Posterior vena cava (tissue), 2 donors: ENCODE measurements at regions of chr6 and their contacts with region 1.

Region 1: DNA sequence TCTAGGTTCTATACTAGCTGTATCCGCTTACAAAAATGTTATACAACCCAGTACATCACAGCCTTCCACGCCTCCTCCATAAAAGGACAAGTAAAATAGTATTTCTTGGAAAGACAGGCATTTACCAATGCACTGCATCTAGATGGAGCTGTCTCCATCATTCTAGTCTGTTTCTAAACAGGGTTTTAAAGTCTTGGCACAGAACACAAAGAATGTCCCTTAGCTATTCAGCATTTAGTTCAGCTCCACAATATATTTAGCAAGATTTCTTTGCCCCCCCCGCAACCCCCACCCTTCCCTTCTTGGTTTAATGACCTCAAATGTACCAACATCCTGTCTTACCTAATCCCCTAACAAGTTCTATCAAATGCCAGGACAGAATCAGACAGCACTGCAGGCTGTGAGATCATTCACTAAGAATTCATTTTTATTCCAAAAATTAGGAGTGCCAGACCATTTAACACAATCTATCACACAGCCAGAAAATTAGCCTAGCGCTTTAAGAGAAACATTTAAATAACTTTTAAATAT is 198.6 kb downstream of the BACH2 start:
- DNase-seq: peak; percentile 84

Region 2: DNA sequence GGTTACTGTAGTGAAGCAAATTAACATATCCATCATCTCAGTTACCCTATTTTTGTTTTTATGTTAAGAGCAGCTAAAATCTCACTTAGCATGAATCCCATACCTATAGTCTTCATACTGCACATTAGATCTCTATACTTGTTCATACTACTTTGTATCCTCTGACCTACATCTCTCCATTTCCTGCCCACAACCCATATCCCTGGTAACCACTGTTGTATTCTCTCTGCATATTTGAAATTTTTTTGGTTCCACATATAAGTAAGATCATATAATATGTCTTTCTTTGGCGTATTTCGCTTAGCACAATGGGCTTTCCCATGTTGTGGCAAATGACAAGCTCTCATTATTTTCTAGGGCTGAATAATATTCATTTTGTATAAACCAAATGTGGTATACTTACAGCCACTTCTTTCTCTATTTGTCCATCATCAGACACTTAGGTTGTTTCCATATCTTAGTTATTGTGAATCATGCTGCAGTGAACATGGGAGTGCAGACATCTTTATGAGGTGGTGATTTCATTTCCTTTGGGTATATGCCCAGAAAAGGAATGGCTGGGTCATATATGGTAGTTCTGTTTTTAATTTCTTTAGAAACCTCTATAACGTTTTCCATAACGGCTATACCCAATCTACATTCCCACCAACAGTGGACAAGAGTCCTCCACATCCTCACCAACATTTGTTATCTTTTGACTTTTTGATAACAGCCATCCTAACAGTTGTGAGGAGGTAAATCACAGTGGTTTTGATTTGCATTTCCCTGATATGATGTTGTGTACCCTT is 158.8 kb after region 1 on chr6:
- intact Hi-C with region 1: no loop called
- DNase-seq: no peak

Region 3: GRCh38 chr6:90375681-90376439 is 277.8 kb after region 1 on chr6:
- intact Hi-C with region 1: loop called in 1 of 2 experiments (anchors 10 kb)
- DNase-seq: no peak